ENCODE measurements at regions of chr5 and their contacts with region 1.

Region 1: DNA sequence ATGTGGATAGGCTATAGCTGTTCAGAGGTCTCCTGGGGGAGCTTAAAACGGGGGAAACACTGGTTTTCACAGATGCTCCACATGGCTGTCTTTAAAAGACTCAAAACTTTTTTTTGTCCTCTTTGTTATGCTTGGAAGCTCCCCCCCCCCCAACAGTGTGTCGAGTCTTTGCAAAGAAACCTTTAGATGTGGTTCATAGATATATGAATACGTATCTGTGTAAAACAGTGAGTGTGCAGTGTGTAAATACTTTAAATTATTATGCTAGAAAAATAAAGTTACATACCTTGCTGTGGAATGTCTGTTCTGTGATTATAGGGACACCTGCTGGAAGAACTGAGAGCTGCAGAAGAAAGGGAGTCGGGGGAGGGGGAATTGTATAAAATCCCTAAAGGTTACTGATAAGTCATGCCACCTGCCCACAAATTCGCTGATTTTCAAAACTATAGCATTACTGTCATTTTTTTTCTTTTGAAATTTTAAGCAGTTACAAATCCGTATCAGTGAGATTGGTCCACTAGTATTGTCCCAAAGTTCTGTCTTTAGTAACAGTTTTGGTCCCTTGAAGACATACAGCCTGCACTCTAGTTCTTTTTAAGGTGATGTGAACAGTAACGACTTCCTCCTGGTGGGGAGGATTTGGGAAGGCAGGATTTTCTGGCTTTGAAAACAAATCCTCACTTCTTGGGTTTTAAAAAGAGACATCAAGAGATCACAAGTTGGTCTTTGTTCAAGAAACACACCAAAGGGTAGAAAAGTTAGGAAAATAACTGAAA is 22.9 kb downstream of the RGMB start:
- DNase-seq: peak in 28 of 35 experiments; percentile 7 to 64 (median 35)
- ATAC-seq: peak; percentile 53 to 72 (median 64)
- H3K4me3 ChIP-seq: no peak overlapping the region
- H3K4me3 Mint-ChIP-seq: no peak overlapping the region
- H3K27ac ChIP-seq: no peak overlapping the region
- H3K27ac Mint-ChIP-seq: no peak overlapping the region
- H3K4me1 ChIP-seq: no peaks in the 10 kb centered on the region
- H3K4me1 Mint-ChIP-seq: peaks cover 3 to 9% (median 3%) of the 10 kb centered on the region in 3 donors
- H3K27me3 ChIP-seq: no peaks in the 10 kb centered on the region
- H3K27me3 Mint-ChIP-seq: peaks cover 0 to 2% of the 10 kb centered on the region in 2 donors

Region 2: GRCh38 chr5:97231025-97231636 is 1565.3 kb before region 1 on chr5:
- CTCF ChIA-PET with region 1: interaction called, 12 to 22 read pairs
- POLR2A ChIA-PET with region 1: no interaction called
- DNase-seq: peak in 11 of 35 experiments; percentile 0 to 63 (median 12)
- ATAC-seq: peak; percentile 47 to 61 (median 56)
- H3K4me3 ChIP-seq: no peak overlapping the region
- H3K4me3 Mint-ChIP-seq: no peak overlapping the region
- H3K27ac ChIP-seq: no peak overlapping the region
- H3K27ac Mint-ChIP-seq: no peak overlapping the region
- H3K4me1 ChIP-seq: no peaks in the 10 kb centered on the region
- H3K4me1 Mint-ChIP-seq: peaks cover 0 to 1% (median 0%) of the 10 kb centered on the region in 3 donors
- H3K27me3 ChIP-seq: no peaks in the 10 kb centered on the region
- H3K27me3 Mint-ChIP-seq: peaks cover 5 to 17% of the 10 kb centered on the region in 2 donors

Region 3: DNA sequence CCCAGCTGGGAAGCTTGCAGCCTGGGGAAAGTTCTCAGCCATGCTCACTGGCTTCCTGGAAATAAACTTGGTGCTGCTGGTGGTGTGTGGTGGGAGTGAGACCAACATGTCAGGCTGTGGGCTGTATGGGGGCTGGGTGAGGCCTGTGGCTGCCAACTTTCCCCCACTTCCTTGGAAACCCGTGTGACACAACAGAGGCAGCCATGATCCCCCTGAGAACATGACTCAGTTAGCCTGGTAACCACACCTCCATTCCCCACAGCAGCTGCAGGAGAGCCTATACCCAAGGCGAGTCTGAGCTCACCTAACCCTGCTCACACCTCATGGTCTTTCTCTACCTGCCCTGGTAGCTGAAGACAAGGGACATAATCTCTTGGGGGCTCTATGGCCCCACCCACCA is 95.7 kb before region 1 on chr5:
- CTCF ChIA-PET with region 1: no interaction called
- POLR2A ChIA-PET with region 1: no interaction called
- DNase-seq: no peak
- ATAC-seq: no peak
- H3K4me3 ChIP-seq: no peak overlapping the region
- H3K4me3 Mint-ChIP-seq: no peak overlapping the region
- H3K27ac ChIP-seq: no peak overlapping the region
- H3K27ac Mint-ChIP-seq: no peak overlapping the region
- H3K4me1 ChIP-seq: no peaks in the 10 kb centered on the region
- H3K4me1 Mint-ChIP-seq: no peaks in the 10 kb centered on the region
- H3K27me3 ChIP-seq: peaks cover 0 to 7% of the 10 kb centered on the region in 2 experiments
- H3K27me3 Mint-ChIP-seq: peaks cover 11 to 13% of the 10 kb centered on the region in 2 donors

Region 4: GRCh38 chr5:98768160-98769005 is 28.0 kb before region 1 on chr5:
- CTCF ChIA-PET with region 1: interaction called, 21 to 35 read pairs
- POLR2A ChIA-PET with region 1: interaction called in 1 of 2 experiments, 4 read pairs
- DNase-seq: peak in 14 of 35 experiments; percentile 2 to 57 (median 21)
- ATAC-seq: peak in 3 of 4 experiments; percentile 22 to 29 (median 25)
- H3K4me3 ChIP-seq: peak overlapping the region; percentile 58 to 91
- H3K4me3 Mint-ChIP-seq: peak overlapping the region; percentile 92 to 99 (median 96)
- H3K27ac ChIP-seq: no peak overlapping the region
- H3K27ac Mint-ChIP-seq: peak overlapping the region in 1 of 2 donors; percentile 37
- H3K4me1 ChIP-seq: peaks cover 36 to 40% of the 10 kb centered on the region in 2 experiments
- H3K4me1 Mint-ChIP-seq: peaks cover 43 to 49% (median 44%) of the 10 kb centered on the region in 3 donors
- H3K27me3 ChIP-seq: peaks cover 16 to 36% of the 10 kb centered on the region in 2 experiments
- H3K27me3 Mint-ChIP-seq: peaks cover 23 to 45% of the 10 kb centered on the region in 2 donors

Region 5: DNA sequence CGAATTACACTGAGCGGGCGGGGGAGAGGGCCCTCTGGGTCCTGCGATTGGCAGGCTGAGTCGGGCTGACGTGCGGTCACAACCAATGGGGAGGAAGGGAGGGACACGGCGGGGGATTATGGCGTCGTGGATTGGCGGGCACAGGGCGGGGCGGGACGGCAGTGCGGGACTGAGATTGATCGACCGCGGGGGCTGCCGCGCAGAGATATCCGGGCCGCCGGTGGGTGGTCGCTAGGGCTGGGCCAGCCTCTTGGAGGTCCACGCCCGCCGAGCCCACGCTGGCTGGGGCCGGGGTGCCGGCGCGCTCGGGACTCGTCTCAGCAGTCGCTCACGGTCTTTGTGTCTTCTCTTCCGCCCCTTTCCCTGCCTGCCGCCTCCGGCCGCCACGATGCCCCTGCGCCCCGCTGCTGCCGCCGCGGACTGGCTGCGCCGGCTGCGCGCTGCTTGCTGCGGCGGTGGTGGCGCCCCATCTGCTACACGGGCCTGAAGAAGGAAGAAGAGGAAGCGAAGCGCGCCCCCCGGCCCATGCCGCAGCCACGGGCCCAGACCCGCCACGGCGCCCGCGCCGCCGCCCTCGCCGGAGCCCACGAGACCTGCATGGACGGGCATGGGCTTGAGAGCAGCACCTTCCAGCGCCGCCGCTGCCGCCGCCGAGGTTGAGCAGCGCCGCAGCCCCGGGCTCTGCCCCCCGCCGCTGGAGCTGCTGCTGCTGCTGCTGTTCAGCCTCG is 22.8 kb before region 1 on chr5 and contains the start of gene RGMB:
- CTCF ChIA-PET with region 1: interaction called, 21 to 35 read pairs
- POLR2A ChIA-PET with region 1: interaction called in 1 of 2 experiments, 4 read pairs
- DNase-seq: peak; percentile 78 to 90 (median 85)
- ATAC-seq: peak; percentile 86 to 89 (median 88)
- H3K4me3 ChIP-seq: peak within 1 kb of the TSS; percentile 66 to 98
- H3K4me3 Mint-ChIP-seq: peak within 1 kb of the TSS; percentile 96 to 99 (median 98)
- H3K27ac ChIP-seq: peak within 1 kb of the TSS; percentile 30
- H3K27ac Mint-ChIP-seq: peak within 1 kb of the TSS; percentile 97 to 98
- H3K4me1 ChIP-seq: peaks cover 39 to 42% of the 10 kb centered on the region in 2 experiments
- H3K4me1 Mint-ChIP-seq: peaks cover 65 to 67% (median 66%) of the 10 kb centered on the region in 3 donors
- H3K27me3 ChIP-seq: peaks cover 5 to 31% of the 10 kb centered on the region in 2 experiments
- H3K27me3 Mint-ChIP-seq: peaks cover 1 to 11% of the 10 kb centered on the region in 2 donors
- total RNA-seq, gene RGMB: 14.6 to 22.8 (median 16.8) TPM